ENCODE measurements at regions of chr3 and their contacts with region 1.

Region 1: GRCh38 chr3:58193682-58194407 is 16.9 kb downstream of the DNASE1L3 start:
- DNase-seq: no peak
- H3K4me3 ChIP-seq: no peak overlapping the region
- H3K4me3 Mint-ChIP-seq: no peak overlapping the region
- H3K27ac ChIP-seq: no peak overlapping the region
- H3K27ac Mint-ChIP-seq: no peak overlapping the region
- H3K4me1 ChIP-seq: no peaks in the 10 kb centered on the region
- H3K4me1 Mint-ChIP-seq: no peaks in the 10 kb centered on the region
- H3K27me3 ChIP-seq: no peaks in the 10 kb centered on the region
- H3K27me3 Mint-ChIP-seq: no peaks in the 10 kb centered on the region

Region 2: DNA sequence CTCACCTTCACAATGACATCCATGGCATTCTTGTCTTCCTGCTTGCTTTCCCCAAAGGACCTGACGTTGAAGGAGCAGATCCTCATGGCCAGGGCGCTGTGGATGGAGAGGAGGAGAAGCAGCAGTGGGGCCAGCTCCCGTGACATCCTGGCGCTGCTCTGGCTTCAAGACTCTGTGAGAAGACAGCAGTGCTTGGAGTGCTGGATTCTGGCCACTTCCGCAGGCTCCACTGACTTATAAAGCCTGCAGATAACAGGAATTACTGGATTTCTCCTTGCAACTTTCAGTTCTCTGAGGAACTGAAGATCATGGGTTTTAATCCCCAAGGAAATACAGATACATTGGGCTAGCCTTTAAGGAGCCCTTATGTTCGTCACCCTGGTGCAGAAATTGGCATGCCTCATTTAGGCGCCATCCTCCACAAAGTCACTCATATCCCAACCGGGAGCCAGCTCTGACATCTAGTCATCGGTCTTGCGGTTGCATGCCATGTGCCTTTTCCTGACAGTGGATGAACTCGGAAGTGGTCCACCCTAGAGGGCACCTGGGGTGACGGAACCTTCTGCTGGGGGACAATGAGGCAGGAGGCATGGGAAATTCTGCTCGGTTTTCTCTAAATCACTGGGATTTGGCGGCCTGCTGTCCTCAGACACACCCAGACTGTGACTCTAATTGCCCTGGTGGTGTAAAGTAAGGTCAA is 17.1 kb after region 1 on chr3 and contains the start of gene DNASE1L3:
- CTCF ChIA-PET with region 1: no interaction called
- POLR2A ChIA-PET with region 1: no interaction called
- DNase-seq: no peak
- H3K4me3 ChIP-seq: no peak within 1 kb of the TSS
- H3K4me3 Mint-ChIP-seq: no peak within 1 kb of the TSS
- H3K27ac ChIP-seq: no peak within 1 kb of the TSS
- H3K27ac Mint-ChIP-seq: no peak within 1 kb of the TSS
- H3K4me1 ChIP-seq: no peaks in the 10 kb centered on the region
- H3K4me1 Mint-ChIP-seq: peaks cover 4 to 7% (median 6%) of the 10 kb centered on the region in 3 donors
- H3K27me3 ChIP-seq: no peaks in the 10 kb centered on the region
- H3K27me3 Mint-ChIP-seq: peaks cover 13 to 26% of the 10 kb centered on the region in 2 donors
- total RNA-seq, gene DNASE1L3: not detected

Region 3: DNA sequence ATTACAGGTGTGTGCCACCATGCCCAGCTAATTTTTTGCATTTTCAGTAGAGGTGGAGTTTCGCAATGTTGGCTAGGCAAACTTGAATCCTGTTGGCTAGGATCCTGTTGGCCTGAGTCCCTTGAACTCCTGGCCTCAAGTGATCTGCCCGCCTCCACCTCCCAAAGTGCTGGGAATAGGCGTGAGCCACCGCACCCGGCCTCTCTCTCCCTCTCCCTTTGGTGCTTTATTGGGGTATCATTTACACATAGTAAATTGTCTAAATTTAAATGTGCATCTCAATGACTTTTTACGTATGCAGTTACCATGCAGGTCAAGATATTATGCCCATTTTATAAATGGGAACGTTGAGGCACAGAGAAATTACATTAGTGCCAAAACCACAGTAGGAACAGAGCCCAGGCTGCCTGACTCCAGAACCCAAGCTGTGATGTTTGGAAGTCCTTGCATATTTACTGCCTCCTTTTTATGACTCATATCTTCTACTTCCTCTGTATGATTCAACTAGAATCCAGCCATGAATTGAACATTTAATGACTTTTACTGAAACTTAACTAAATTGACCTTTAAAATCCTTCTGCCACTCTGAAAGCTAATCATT is 78.2 kb after region 1 on chr3:
- CTCF ChIA-PET with region 1: no interaction called
- POLR2A ChIA-PET with region 1: interaction called, 11 read pairs
- DNase-seq: no peak
- H3K4me3 ChIP-seq: no peak overlapping the region
- H3K4me3 Mint-ChIP-seq: no peak overlapping the region
- H3K27ac ChIP-seq: no peak overlapping the region
- H3K27ac Mint-ChIP-seq: no peak overlapping the region
- H3K4me1 ChIP-seq: no peaks in the 10 kb centered on the region
- H3K4me1 Mint-ChIP-seq: no peaks in the 10 kb centered on the region
- H3K27me3 ChIP-seq: no peaks in the 10 kb centered on the region
- H3K27me3 Mint-ChIP-seq: no peaks in the 10 kb centered on the region

Measured in CD8-positive, alpha-beta memory T cell (primary cell).